ENCODE measurements at regions of chr2 and their contacts with region 1.

Region 1: DNA sequence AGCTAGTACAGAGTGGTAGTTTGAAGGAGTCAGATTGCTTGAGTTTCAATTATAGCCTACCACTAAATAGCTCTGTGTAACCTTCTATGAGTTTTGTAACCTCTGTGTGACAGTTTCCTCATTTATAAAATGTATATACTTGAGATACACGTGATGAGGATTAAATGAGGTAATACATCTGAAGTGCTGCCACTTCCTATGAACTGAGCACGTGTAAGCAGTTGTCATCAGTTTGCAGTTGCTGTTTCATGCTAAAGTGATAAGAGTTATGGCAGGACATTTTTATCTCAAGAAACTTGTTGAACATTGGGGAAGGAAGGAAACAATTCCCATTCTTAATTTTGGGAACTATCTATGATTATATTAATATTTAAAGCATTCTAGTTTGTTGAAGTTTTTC is 38.5 kb downstream of the CARF start:
- DNase-seq: peak in 3 of 14 experiments; percentile 8 to 31 (median 25)
- ATAC-seq: no peak
- H3K4me3 ChIP-seq: no peak overlapping the region
- H3K4me3 Mint-ChIP-seq: no peak overlapping the region
- H3K27ac ChIP-seq: no peak overlapping the region
- H3K27ac Mint-ChIP-seq: no peak overlapping the region
- H3K4me1 ChIP-seq: no peaks in the 10 kb centered on the region
- H3K4me1 Mint-ChIP-seq: no peaks in the 10 kb centered on the region
- H3K27me3 ChIP-seq: no peaks in the 10 kb centered on the region
- H3K27me3 Mint-ChIP-seq: no peaks in the 10 kb centered on the region
- CTCF ChIP-seq: no peak

Region 2: DNA sequence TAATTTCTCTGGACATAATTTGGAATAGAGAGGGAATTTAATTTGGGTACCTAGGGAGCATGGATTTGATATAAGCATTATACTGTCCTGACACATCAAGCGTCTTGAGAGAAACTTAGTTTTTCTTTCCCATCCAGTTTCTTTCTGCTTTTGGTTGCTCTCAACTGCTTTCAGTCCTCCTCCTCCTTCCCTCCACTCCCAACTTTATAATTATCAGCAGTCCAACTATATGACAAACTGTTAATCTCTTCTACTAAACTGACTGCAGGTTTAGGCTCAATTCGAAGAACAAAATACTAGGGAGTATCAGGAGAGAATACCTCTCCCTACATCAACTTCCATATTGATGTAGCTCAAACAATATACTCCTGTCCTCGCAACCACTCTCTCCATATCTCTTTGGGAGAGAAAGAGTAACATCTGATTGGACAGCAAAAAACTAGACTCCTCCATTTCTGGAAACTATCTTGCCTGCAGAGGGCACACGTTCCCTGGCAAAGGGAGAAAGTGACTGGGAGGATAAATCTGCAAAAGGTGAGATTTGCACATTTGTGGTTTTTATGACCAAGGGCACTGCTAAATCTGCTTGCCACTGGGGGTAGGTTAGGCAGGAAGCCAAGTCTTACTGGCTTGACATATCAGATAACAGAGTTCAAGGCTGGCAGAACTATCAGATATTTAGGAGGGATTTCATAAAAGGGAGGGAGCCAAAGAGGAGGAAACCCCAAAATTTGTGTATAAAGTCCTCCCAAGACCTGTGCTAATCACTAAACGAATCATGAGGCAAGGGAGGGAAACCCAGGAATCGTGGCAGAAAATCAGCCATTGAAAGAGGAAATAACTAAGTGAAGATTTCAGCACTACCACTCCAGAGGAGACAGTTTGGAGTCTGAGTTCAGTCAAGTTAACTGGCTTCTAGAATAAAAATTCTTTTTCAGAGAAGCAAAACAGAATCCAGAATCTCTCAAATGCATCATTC is 119.1 kb before region 1 on chr2:
- CTCF ChIA-PET with region 1: no interaction called
- POLR2A ChIA-PET with region 1: no interaction called
- intact Hi-C with region 1: loop called in 1 of 2 experiments (anchors 10 kb)
- DNase-seq: peak in 13 of 14 experiments; percentile 6 to 71 (median 18)
- ATAC-seq: peak; percentile 73
- H3K4me3 ChIP-seq: no peak overlapping the region
- H3K4me3 Mint-ChIP-seq: peak overlapping the region; percentile 46
- H3K27ac ChIP-seq: no peak overlapping the region
- H3K27ac Mint-ChIP-seq: no peak overlapping the region
- H3K4me1 ChIP-seq: peaks cover 6% of the 10 kb centered on the region
- H3K4me1 Mint-ChIP-seq: peaks cover 17% of the 10 kb centered on the region
- H3K27me3 ChIP-seq: no peaks in the 10 kb centered on the region
- H3K27me3 Mint-ChIP-seq: no peaks in the 10 kb centered on the region
- CTCF ChIP-seq: peak; percentile 64

Region 3: DNA sequence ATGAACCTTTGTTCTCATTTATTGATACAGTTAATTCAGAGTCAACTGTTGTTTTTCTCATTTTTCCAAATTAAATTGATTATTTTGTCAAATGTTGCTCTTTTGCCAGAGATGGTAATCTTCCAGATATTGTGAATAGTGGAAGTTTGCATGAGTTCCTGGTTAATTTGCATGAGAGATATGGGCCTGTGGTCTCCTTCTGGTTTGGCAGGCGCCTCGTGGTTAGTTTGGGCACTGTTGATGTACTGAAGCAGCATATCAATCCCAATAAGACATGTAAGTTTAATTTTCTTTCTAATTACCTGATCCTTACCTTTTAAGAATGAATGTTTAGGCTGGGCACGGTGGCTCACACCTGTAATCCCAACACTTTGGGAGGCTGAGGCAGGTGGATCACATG is 296.1 kb after region 1 on chr2:
- CTCF ChIA-PET with region 1: no interaction called
- POLR2A ChIA-PET with region 1: no interaction called
- intact Hi-C with region 1: no loop called
- DNase-seq: no peak
- ATAC-seq: no peak
- H3K4me3 ChIP-seq: no peak overlapping the region
- H3K4me3 Mint-ChIP-seq: no peak overlapping the region
- H3K27ac ChIP-seq: no peak overlapping the region
- H3K27ac Mint-ChIP-seq: no peak overlapping the region
- H3K4me1 ChIP-seq: peaks cover 4% of the 10 kb centered on the region
- H3K4me1 Mint-ChIP-seq: peaks cover 28% of the 10 kb centered on the region
- H3K27me3 ChIP-seq: no peaks in the 10 kb centered on the region
- H3K27me3 Mint-ChIP-seq: no peaks in the 10 kb centered on the region
- CTCF ChIP-seq: no peak